Heart left ventricle (tissue), 16 donors: ENCODE measurements at regions of chr19 and their contacts with region 1.

Region 1: GRCh38 chr19:57689750-57690149 is 8.0 kb downstream of the ZNF551 start:
- DNase-seq: no peak
- ATAC-seq: no peak
- H3K4me3 ChIP-seq: no peak overlapping the region
- H3K27ac ChIP-seq: no peak overlapping the region
- H3K4me1 ChIP-seq: peaks cover 0 to 12% (median 0%) of the 10 kb centered on the region in 12 donors
- H3K27me3 ChIP-seq: no peaks in the 10 kb centered on the region
- CTCF ChIP-seq: no peak
- POLR2A ChIP-seq: no peak

Region 2: GRCh38 chr19:57613941-57614743 is 75.6 kb before region 1 on chr19 and contains the start of gene ZNF134:
- intact Hi-C with region 1: loop called in 1 of 10 experiments (anchors 5 kb)
- DNase-seq: peak; percentile 93 to 97 (median 95)
- ATAC-seq: peak; percentile 95 to 99 (median 98)
- H3K4me3 ChIP-seq: peak within 1 kb of the TSS; percentile 87 to 100 (median 96)
- H3K27ac ChIP-seq: peak within 1 kb of the TSS; percentile 55 to 87 (median 80)
- H3K4me1 ChIP-seq: peaks cover 0 to 41% (median 15%) of the 10 kb centered on the region in 12 donors
- H3K27me3 ChIP-seq: no peaks in the 10 kb centered on the region
- CTCF ChIP-seq: peak in 9 of 12 donors; percentile 21 to 61 (median 46)
- POLR2A ChIP-seq: peak in 1 of 2 donors; percentile 46
- total RNA-seq, gene ZNF134: 12.6 to 15.8 (median 13.8) TPM

Region 3: GRCh38 chr19:57719901-57720519 is 30.3 kb after region 1 on chr19:
- intact Hi-C with region 1: no loop called
- DNase-seq: no peak
- ATAC-seq: no peak
- H3K4me3 ChIP-seq: no peak overlapping the region
- H3K27ac ChIP-seq: no peak overlapping the region
- H3K4me1 ChIP-seq: no peaks in the 10 kb centered on the region
- H3K27me3 ChIP-seq: no peaks in the 10 kb centered on the region
- CTCF ChIP-seq: no peak
- POLR2A ChIP-seq: no peak